Transverse colon (tissue), 4 donors: ENCODE measurements at regions of chr6 and their contacts with region 1.

Region 1: GRCh38 chr6:119484637-119484997 is 135.1 kb upstream of the MAN1A1 start:
- DNase-seq: no peak
- H3K4me3 ChIP-seq: no peak overlapping the region
- H3K27ac ChIP-seq: no peak overlapping the region
- H3K4me1 ChIP-seq: peaks cover 6 to 15% (median 10%) of the 10 kb centered on the region in 4 donors
- H3K27me3 ChIP-seq: no peaks in the 10 kb centered on the region
- CTCF ChIP-seq: no peak
- EP300 ChIP-seq: no peak
- POLR2A ChIP-seq: no peak

Region 2: DNA sequence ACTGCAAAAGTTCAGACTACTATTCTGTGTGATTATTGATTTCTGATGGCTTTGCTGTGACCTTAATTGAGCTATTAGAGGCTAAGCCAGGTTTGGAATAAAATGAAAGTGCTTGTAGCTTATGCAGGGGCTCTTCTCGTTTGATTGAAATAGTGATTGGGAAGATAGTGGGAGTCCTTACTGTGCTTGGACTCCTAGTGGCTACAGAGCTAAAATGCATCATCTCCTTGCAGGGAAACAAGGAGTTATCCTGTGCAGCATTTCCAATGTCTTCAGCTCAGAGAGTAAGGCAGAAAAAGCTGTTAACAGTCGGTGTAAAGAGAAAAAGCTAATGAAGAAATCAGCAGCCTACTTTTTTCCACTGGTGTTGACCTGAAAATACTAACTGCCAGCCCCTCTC is 1404.1 kb before region 1 on chr6:
- in situ Hi-C with region 1: no loop called
- intact Hi-C with region 1: loop called (anchors 10 kb)
- DNase-seq: no peak
- H3K4me3 ChIP-seq: no peak overlapping the region
- H3K27ac ChIP-seq: no peak overlapping the region
- H3K4me1 ChIP-seq: no peaks in the 10 kb centered on the region
- H3K27me3 ChIP-seq: no peaks in the 10 kb centered on the region
- CTCF ChIP-seq: no peak
- EP300 ChIP-seq: no peak
- POLR2A ChIP-seq: no peak